PC-3 (cell line): ENCODE measurements at regions of chr12 and their contacts with region 1.

Region 1: DNA sequence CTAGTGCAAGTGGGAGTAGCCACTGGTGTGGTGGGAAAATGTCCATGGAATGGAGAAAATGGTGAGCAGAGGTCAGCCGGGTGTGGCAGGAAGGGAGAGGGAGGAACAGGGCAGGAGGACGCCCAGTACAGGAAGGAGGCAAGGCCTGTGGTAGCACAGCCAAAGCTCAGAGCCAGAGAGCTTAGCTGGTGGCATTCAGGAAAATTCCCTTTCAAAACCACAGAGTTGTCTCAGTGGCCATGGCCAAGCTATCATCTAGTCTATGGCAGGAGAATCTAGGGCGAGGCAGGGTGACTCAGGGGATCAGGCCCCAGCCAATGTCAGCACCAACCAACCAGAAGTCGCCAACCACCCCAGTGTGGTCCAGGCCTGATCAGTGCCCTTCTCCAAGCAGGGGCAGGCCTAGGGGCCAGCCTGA is 67.7 kb upstream of the DDX11 start:
- DNase-seq: peak; percentile 90
- ATAC-seq: peak; percentile 90
- H3K4me3 ChIP-seq: no peak overlapping the region
- H3K27ac ChIP-seq: peak overlapping the region; percentile 98
- H3K4me1 ChIP-seq: peaks cover 49% of the 10 kb centered on the region
- H3K27me3 ChIP-seq: no peaks in the 10 kb centered on the region
- CTCF ChIP-seq: no peak

Region 2: GRCh38 chr12:30985814-30986452 is 20.0 kb before region 1 on chr12:
- CTCF ChIA-PET with region 1: interaction called, 4 read pairs
- POLR2A ChIA-PET with region 1: no interaction called
- intact Hi-C with region 1: loop called (anchors 1 kb)
- DNase-seq: peak; percentile 69
- ATAC-seq: peak; percentile 62
- H3K4me3 ChIP-seq: no peak overlapping the region
- H3K27ac ChIP-seq: no peak overlapping the region
- H3K4me1 ChIP-seq: peaks cover 18% of the 10 kb centered on the region
- H3K27me3 ChIP-seq: no peaks in the 10 kb centered on the region
- CTCF ChIP-seq: peak; percentile 77

Region 3: DNA sequence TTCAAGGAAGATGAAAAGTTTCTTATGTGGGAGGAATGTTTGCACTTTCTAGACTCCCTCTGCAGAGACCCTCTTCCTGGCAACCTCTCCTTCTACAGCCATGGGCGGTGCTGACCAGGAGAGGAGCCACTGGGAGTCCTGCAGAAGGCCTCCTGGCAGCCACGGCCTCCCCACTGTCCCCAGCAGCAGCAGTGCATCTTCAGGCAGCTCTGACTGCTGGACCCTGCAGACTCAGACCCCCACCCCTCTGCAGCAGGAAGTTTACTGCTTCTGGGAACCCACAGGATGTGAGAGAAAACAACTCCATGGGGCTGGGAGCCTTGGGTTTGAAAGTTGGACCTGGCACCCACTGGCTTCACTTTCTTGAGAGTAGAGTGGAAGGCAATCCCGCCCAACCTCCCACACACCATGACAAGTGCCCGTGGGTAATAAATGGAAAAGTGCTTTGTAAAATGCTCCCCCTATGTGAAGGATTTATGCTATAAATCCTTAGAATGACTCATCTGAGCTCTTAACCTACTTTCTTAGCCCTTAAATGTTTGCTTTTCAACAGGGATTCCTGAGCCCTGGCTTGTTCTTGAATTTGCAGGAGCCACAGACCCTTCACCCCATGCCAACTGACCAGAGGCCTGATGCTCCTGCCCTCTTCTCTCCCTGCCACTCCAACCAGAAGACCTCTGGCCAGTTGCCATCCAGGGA is 30.2 kb after region 1 on chr12:
- CTCF ChIA-PET with region 1: no interaction called
- POLR2A ChIA-PET with region 1: interaction called, 3 read pairs
- intact Hi-C with region 1: loop called (anchors 1 kb)
- DNase-seq: peak; percentile 60
- ATAC-seq: peak; percentile 91
- H3K4me3 ChIP-seq: no peak overlapping the region
- H3K27ac ChIP-seq: peak overlapping the region; percentile 82
- H3K4me1 ChIP-seq: peaks cover 40% of the 10 kb centered on the region
- H3K27me3 ChIP-seq: no peaks in the 10 kb centered on the region
- CTCF ChIP-seq: 0 out of 2 replicates have a peak, but pooled peaks have one; percentile 17